Sigmoid colon (tissue), 7 donors: ENCODE measurements at regions of chr3 and their contacts with region 1.

Region 1: DNA sequence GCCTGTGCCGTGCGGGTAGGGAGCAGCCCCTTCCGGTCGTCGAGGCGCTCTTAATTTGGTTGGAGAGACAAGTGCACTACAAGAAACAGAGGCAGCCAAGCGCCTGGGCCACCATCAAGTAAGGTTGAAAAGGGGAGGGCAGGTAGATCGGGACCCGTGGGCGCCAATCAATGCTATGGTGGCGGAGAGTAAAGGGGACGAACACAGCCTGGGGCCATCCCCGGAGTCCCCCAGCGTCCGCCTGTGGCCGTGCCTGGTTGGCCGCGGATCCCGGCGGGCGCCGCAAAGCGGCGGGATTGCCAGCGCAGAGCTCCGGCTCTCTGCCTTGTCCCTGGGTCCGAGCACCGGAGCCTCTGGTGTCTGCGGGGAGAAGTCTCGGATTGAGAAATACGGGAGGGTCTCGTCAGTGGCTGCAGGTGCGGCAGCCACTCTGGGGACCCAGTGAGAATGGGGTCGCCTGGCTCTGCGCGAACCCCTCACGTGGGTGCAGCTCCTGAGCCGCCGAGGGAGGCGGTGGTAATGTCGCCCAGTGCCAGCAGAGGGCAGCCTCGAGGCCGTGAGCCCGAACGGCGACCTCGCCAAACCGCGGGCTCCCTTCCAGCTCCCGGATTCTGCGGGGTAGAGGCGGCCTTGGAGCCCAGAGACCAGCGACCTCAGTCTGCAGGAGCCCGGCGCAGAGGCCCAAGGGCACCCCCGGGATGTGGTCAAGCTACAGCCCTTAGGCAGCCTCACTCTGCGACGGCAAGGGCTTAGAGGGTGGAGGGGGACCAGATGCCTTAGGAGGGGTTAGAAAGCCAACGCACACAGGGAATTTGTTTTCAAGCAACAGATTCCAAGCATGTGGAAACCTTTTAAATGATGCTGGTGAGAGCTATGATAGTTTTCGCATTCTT is 10.8 kb downstream of the FOXL2 start:
- DNase-seq: peak; percentile 84
- H3K4me3 ChIP-seq: peak overlapping the region in 3 of 4 donors; percentile 19 to 42 (median 37)
- H3K27ac ChIP-seq: no peak overlapping the region
- H3K4me1 ChIP-seq: peaks cover 0 to 43% (median 37%) of the 10 kb centered on the region in 4 donors
- H3K27me3 ChIP-seq: peaks cover 52 to 66% (median 60%) of the 10 kb centered on the region in 3 donors
- CTCF ChIP-seq: peak; percentile 46 to 97 (median 68)
- EP300 ChIP-seq: no peak
- POLR2A ChIP-seq: no peak

Region 2: DNA sequence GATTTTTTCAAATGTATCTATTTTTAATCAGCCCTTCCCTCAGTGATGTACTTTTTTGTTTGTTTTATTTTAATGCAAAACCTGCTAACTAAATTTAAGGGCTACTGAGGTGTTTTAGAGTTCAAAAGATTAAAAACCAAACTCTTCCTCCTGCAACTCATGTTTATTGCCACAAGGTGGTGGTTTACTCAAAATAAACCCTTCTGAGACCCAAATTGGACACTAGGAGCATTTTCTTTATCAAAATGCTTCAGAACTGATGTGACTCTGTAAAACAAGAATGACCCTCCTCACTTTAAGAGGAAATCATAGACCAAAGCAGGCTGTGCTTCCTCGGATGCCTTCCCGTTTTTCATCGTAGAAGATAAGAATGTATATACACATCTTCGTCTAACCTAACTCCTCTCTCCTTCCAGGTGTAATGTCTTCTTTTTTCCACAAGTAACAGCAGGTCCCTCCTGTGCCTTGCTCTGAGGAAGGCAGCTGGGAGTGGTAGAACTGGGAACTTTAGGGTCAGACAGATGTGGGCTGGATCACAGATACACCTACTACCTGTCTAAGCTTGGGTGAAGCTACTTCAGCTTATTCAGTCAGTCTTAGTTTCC is 603.5 kb before region 1 on chr3:
- intact Hi-C with region 1: no loop called
- DNase-seq: no peak
- H3K4me3 ChIP-seq: no peak overlapping the region
- H3K27ac ChIP-seq: no peak overlapping the region
- H3K4me1 ChIP-seq: peaks cover 0 to 16% (median 7%) of the 10 kb centered on the region in 4 donors
- H3K27me3 ChIP-seq: no peaks in the 10 kb centered on the region
- CTCF ChIP-seq: peak in 3 of 4 experiments; percentile 6 to 58 (median 44)
- EP300 ChIP-seq: no peak
- POLR2A ChIP-seq: no peak

Region 3: GRCh38 chr3:138975351-138975750 is 39.3 kb after region 1 on chr3:
- intact Hi-C with region 1: loop called (anchors 5 kb)
- DNase-seq: no peak
- H3K4me3 ChIP-seq: no peak overlapping the region
- H3K27ac ChIP-seq: no peak overlapping the region
- H3K4me1 ChIP-seq: peaks cover 0 to 5% (median 0%) of the 10 kb centered on the region in 4 donors
- H3K27me3 ChIP-seq: peaks cover 0 to 4% (median 0%) of the 10 kb centered on the region in 3 donors
- CTCF ChIP-seq: no peak
- EP300 ChIP-seq: no peak
- POLR2A ChIP-seq: no peak